ENCODE measurements at regions of chr20 and their contacts with region 1.

Region 1: GRCh38 chr20:45987108-45987780 is 15.2 kb upstream of the ZNF335 start:
- DNase-seq: peak; percentile 85

Region 2: DNA sequence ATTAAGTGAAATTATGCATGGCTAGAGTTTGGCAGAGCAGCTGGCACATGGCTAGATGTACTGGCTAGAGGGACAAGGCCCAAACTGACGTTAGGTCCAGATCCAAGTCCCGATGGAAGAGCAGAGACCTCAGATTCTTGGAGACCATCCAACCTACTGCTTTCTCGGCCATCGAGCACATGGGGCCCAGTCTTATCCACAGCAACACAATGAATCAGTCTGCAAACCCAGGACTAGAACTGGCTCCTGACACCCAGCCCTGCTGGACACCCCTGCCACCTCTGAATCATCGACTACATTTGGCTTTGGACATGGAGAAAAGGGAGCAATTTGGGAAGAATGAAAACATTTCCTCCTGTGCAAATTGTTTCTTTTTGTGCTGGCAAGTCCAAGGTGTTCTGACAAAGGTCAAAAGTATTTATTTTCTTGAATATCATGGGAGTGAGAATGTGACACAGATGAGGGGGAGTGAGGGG is 1125.7 kb before region 1 on chr20:
- CTCF ChIA-PET with region 1: no interaction called
- POLR2A ChIA-PET with region 1: no interaction called
- DNase-seq: no peak

Region 3: DNA sequence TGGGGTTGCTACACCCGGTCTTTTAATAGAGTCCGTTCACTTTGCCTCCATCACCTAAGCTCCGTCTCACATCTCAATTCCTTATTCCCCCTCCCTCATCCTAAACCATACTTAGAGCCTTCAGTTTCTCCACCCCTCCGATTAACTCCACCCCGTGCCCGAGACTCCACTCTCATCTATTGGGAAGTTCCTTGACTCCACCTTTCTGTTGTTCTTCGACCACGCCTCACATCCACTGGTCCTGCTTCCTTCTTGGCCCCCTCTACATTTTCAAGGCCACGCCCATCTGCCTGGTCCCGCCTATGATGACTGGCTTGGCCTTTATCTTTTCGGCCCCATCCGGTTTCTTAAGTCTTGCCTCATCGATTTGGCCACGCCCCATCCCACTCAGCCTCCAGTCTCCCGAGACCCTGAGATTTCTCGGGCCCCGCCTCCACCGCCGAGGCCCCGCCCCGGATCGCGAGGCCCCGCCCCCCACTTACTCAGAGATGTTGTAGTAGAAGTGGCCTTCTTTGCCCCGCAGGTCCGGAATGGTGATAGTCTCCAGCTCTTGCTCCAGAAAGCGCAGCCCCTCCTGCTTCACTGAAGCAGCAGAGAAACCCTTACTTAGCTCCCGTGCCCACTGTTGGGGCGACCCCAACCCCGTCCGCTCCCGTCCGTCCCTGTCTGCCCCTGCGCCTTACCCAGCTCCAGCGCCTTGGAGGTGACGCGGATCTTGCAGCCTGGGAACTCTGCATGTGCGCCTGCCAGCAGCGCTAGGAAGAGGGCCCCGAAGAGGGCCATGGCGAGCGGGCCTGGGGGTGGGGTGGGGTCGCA is 76.4 kb before region 1 on chr20:
- CTCF ChIA-PET with region 1: no interaction called
- POLR2A ChIA-PET with region 1: no interaction called
- DNase-seq: peak; percentile 99

Region 4: GRCh38 chr20:45971675-45972499 is 15.4 kb before region 1 on chr20 and contains the start of gene ZNF335:
- CTCF ChIA-PET with region 1: interaction called, 19 read pairs
- POLR2A ChIA-PET with region 1: interaction called, 10 read pairs
- DNase-seq: peak; percentile 95

Region 5: DNA sequence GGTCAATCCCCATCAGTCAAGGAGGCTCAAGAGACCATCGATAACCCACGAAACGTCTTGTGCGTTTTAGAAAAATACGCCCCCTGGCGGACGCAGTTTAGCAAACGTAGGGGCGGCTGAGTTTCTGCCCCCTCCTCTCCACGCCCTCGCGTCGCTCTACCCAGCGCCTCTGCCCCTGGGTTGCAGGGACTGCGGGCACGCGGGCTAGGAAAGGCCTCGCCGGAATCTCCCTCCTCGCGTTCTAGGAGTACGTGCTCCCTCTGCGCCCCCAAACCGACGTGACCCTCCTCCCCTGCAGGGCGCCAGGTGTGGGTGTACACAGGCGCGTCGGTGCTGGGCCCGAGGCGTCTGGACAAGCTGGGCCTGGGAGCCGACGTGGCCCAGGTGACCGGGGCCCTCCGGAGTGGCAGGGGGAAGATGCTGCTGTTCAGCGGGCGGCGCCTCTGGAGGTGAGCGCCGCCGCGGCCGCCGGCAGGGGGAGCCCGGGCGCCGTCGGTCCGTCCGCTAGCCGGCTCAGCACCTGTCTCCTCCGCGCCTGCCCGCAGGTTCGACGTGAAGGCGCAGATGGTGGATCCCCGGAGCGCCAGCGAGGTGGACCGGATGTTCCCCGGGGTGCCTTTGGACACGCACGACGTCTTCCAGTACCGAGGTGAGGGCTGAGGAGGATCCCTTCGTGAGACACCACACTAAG is 26.7 kb after region 1 on chr20:
- CTCF ChIA-PET with region 1: interaction called, 10 read pairs
- POLR2A ChIA-PET with region 1: interaction called, 3 read pairs
- DNase-seq: peak; percentile 77

Region 6: GRCh38 chr20:46108435-46108841 is 121.2 kb after region 1 on chr20:
- CTCF ChIA-PET with region 1: no interaction called
- POLR2A ChIA-PET with region 1: no interaction called
- DNase-seq: no peak

Region 7: GRCh38 chr20:46145713-46146112 is 158.5 kb after region 1 on chr20:
- CTCF ChIA-PET with region 1: no interaction called
- POLR2A ChIA-PET with region 1: no interaction called
- DNase-seq: no peak